ENCODE measurements at regions of chr19 and their contacts with region 1.

Region 1: DNA sequence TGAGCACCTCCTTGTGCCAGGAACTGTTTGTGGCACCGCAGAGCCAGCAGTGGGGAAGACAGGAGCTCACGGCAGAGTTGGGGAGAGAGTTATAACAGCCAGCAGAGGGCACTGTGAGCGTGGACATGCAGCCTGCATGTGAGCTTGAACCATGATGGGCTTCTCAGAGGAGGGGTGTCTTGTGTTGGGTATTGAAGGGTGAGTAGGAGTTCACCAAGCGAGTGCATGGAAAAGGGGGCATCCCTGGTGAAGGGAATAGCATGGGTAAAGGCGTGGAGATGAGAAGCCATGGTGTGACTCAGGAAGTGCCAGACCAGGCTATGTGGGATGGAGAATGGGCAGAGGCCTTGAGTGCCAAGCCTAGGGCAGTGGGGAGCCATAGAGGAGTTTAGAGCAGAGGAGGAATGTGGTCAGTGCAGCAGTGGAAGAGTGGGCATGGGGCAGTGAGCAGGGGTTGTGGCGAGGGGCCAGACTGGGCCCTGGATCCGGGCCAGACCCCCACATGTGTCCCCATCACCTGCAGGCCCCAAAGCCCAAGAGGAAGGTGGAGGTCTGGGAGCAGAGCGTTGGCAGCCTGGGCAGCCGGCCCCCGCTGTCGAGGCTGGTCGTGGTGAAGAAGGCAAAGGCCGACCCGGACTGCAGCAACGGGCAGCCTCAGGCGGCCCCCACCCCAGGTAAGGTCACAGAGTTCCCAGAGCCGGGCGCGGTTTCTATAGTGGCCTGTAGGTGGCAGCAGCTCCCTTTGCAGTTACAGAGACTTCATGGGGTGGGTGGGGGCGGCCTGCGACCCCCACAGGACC is 11.8 kb upstream of the SHD start:
- DNase-seq: peak; percentile 79
- ATAC-seq: peak; percentile 63

Region 2: GRCh38 chr19:4284176-4284958 is 17.1 kb after region 1 on chr19:
- intact Hi-C with region 1: no loop called
- DNase-seq: no peak
- ATAC-seq: no peak

Region 3: DNA sequence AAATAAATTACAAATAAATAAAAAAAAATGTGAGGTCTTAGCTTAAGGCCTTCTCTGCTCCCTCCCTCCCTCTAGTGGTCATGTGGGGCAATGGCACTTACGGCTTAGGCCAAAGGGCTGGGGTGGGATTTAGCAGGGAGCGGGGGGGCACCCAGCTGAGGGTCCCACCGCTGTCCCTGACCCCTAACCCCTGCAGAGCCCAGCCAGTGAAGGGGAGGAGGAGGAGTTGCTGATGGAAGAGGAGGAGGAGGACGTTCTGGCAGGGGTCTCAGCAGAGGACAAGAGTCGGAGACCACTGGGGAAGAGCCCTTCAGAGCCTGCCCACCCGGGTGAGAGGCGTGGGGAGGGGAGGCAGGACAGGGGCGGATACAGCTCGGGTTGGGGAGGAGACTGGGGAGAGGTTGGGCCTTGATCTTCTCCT is 85.4 kb after region 1 on chr19:
- intact Hi-C with region 1: loop called (anchors 5 kb)
- DNase-seq: no peak
- ATAC-seq: peak; percentile 40

Region 4: DNA sequence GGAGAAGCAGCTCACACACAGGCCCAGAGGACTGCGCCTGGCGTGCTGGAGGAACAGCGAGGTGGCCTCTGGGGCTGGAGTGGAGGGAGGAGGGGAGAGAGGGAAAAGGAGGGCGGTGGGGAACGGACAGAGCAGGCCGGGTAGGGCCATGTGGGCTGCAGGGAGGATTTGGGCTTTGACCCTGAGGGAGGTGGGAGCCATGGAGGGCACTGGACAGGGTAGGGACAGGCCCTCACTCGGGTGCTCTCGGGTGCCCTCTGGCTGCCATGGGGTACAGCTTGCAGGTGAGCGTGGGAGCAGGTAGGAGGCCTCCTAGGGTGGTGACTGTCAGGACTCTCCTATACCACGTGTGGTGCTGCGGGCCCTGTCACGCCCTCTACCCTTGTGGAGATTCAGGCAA is 228.2 kb after region 1 on chr19:
- intact Hi-C with region 1: no loop called
- DNase-seq: no peak
- ATAC-seq: no peak

Region 5: DNA sequence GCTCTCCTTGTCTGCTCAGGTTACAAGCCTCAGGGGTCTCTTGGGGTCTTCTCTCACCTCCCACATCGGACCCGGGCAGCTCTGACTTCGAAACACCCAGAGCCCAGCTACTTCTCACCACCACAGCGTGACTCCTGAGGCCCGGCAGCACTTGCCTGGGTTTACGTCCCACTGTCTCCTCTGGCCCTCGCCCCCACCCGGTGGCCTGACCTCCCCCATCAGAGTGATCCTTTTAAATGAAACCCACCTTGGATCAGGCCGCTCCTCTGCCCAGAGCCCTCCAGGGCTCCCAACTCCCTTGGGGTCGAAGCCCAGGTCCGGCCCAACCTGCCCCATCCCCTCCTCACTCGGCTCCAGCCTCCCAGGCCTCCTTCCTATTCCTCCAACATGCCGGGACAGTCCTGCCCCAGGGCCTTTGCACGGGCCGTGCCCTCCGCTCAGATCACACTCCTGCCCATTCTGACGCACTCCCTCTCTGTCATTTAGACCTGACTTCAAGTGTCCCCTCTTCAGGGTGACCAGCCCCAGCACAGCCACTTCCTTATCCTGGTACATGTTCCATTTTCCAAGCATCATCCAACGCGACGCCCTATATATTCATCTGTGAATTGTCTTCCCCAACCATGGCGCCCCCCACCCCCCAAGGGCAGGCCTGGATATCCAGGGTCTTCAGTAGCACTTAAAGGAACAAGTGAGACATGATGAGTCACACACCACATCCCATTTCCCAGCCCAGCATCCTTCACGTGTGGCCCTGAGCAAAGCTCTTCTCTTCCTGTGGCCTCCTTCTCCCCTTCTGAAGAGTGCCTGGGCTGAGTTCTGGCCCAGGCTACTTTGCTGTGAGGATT is 238.8 kb after region 1 on chr19:
- intact Hi-C with region 1: no loop called
- DNase-seq: no peak
- ATAC-seq: no peak